Heart right ventricle (tissue), 16 donors: ENCODE measurements at regions of chr21 and their contacts with region 1.

Region 1: DNA sequence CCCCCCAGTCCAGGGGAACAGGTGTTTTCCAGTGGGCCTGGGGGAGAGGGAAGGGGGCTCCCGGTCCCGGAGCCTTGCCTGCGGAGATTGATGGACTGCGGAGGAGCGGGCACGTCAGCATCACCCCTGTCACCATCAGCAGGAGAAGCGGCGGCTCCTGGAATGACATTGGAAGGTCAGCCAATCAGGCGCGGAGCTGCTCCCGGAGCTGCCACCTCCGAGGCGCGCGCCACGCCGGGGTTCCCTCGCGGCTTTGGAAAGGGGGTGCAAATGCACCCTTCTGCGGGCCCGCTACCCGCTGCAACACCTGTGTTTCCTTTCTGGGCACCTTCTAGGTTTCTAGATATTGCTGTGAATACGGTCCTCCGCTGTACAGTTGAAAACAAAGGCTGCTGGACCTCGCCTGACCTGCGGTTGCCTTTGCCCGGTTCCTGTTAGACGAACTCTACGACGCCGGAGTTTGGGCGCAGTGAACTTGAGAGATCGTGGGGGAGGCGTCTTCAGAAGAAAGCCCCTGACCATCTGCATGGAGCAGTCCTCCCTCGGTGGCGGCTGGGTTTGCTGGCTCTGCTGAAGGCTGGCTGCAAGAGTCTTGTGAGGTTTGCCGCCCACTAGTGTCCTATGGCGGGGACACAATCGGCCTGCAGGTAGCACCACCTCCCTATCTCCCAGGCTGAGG is 5.3 kb downstream of the DSCAM start:
- DNase-seq: peak; percentile 42 to 47
- ATAC-seq: peak; percentile 47 to 92 (median 78)
- H3K4me3 ChIP-seq: peak overlapping the region in 7 of 10 donors; percentile 4 to 39 (median 28)
- H3K27ac ChIP-seq: no peak overlapping the region
- H3K4me1 ChIP-seq: peaks cover 0 to 4% (median 0%) of the 10 kb centered on the region in 9 donors
- H3K27me3 ChIP-seq: peaks cover 6 to 93% (median 70%) of the 10 kb centered on the region in 7 donors
- CTCF ChIP-seq: peak in 7 of 9 donors; percentile 31 to 61 (median 44)

Region 2: GRCh38 chr21:40466893-40467501 is 374.7 kb before region 1 on chr21:
- intact Hi-C with region 1: loop called in 6 of 10 experiments (anchors 5 to 10 kb)
- DNase-seq: peak in 1 of 2 donors; percentile 7
- ATAC-seq: no peak
- H3K4me3 ChIP-seq: no peak overlapping the region
- H3K27ac ChIP-seq: no peak overlapping the region
- H3K4me1 ChIP-seq: no peaks in the 10 kb centered on the region
- H3K27me3 ChIP-seq: peaks cover 0 to 11% (median 0%) of the 10 kb centered on the region in 7 donors
- CTCF ChIP-seq: peak in 8 of 9 donors; percentile 9 to 60 (median 46)